Common myeloid progenitor, CD34-positive (primary cell): ENCODE measurements at regions of chr7 and their contacts with region 1.

Region 1: GRCh38 chr7:150420987-150421674 is 29.3 kb upstream of the GIMAP8 start:
- DNase-seq: peak; percentile 76 to 86 (median 85)
- H3K4me3 ChIP-seq: no peak overlapping the region
- H3K27ac ChIP-seq: no peak overlapping the region
- H3K4me1 ChIP-seq: peaks cover 0 to 2% (median 0%) of the 10 kb centered on the region in 4 experiments
- H3K27me3 ChIP-seq: peaks cover 0 to 1% (median 0%) of the 10 kb centered on the region in 5 experiments

Region 2: DNA sequence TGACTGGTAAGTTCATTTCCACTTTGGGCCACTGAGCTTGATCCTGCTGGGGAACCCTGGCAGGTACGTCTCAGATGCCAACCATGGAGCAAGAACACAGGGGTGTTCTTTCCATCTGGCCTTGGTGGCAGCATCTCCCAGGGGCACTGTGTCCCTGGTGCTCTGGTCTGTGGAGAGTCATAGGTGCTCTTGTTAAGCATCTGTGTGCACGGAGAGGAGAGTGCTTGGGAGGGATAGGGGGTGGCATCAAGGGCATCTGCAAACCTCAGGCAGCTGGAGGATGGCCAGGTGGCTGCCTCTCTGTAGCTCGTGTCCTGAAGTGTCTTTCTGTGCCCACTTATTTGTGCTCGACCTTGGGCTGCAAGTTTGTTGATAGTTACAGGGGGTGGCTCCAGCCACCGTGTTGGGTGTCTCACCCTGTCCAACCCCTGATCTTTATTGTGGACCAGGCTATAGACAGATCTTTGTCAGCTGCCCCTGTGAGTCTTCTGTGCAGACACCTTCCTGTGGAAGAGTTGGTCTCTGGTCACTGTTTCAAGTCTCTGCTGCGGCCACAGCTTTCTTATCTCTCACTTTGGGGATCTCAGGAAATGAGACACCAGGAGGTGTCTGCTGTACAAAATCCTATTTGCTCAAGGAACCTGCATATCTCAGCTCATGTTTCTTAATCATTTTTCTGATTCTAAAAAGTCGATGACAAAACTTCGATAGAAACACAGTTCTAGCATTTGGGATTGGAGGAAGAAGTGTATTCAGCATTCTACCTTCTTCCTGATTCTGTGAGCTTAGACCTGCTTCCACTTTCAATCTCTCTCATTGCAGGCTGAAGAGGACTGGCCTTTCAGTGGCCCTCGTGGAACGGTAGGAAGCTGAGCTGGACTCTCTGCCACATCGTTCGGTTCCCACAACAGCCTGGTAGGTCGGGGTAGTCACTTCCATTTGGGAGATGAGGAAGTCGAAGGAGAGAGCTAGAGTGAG is 12.1 kb after region 1 on chr7:
- CTCF ChIA-PET with region 1: interaction called, 14 read pairs
- POLR2A ChIA-PET with region 1: no interaction called
- DNase-seq: peak in 1 of 3 donors; percentile 26
- H3K4me3 ChIP-seq: peak overlapping the region in 2 of 7 experiments; percentile 41 to 50
- H3K27ac ChIP-seq: no peak overlapping the region
- H3K4me1 ChIP-seq: peaks cover 4 to 61% (median 34%) of the 10 kb centered on the region in 4 experiments
- H3K27me3 ChIP-seq: no peaks in the 10 kb centered on the region

Region 3: GRCh38 chr7:150489782-150490181 is 68.7 kb after region 1 on chr7:
- CTCF ChIA-PET with region 1: no interaction called
- POLR2A ChIA-PET with region 1: no interaction called
- DNase-seq: no peak
- H3K4me3 ChIP-seq: no peak overlapping the region
- H3K27ac ChIP-seq: no peak overlapping the region
- H3K4me1 ChIP-seq: peaks cover 4 to 12% (median 6%) of the 10 kb centered on the region in 4 experiments
- H3K27me3 ChIP-seq: no peaks in the 10 kb centered on the region